CD14-positive monocyte (primary cell): ENCODE measurements at regions of chr10 and their contacts with region 1.

Region 1: GRCh38 chr10:124688889-124689670 is 55.1 kb downstream of the FAM53B start:
- DNase-seq: no peak
- H3K4me3 ChIP-seq: no peak overlapping the region
- H3K4me3 Mint-ChIP-seq: peak overlapping the region in 1 of 2 donors; percentile 31
- H3K27ac ChIP-seq: peak overlapping the region in 1 of 2 donors; percentile 40
- H3K27ac Mint-ChIP-seq: peak overlapping the region in 5 of 7 donors; percentile 17 to 93 (median 30)
- H3K4me1 ChIP-seq: peaks cover 40 to 43% of the 10 kb centered on the region in 2 donors
- H3K4me1 Mint-ChIP-seq: peaks cover 41% of the 10 kb centered on the region
- H3K27me3 ChIP-seq: no peaks in the 10 kb centered on the region
- H3K27me3 Mint-ChIP-seq: peaks cover 0 to 1% (median 0%) of the 10 kb centered on the region in 3 donors
- CTCF ChIP-seq: no peak

Region 2: DNA sequence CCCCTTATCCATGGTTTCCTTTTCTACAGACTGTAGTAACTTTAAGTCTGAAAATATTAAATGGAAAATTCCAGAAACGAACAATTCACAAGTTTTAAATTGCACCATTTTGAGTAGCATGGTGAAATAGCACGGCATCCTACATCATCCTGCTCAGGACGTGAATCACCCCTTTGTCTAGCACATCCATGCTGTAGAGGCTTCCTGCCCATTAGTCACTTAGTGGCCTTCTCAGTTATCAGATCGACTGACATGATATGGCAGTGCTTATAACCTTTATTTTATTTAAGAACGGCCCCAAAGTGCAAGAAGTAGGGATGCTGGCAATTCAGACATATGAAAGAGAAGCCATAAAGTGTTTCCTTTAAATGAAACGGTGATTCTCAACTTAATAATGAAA is 880.2 kb before region 1 on chr10:
- intact Hi-C with region 1: no loop called
- DNase-seq: no peak
- H3K4me3 ChIP-seq: no peak overlapping the region
- H3K4me3 Mint-ChIP-seq: no peak overlapping the region
- H3K27ac ChIP-seq: no peak overlapping the region
- H3K27ac Mint-ChIP-seq: no peak overlapping the region
- H3K4me1 ChIP-seq: no peaks in the 10 kb centered on the region
- H3K4me1 Mint-ChIP-seq: no peaks in the 10 kb centered on the region
- H3K27me3 ChIP-seq: peaks cover 4 to 5% of the 10 kb centered on the region in 2 donors
- H3K27me3 Mint-ChIP-seq: peaks cover 3 to 12% (median 8%) of the 10 kb centered on the region in 3 donors
- CTCF ChIP-seq: no peak

Region 3: GRCh38 chr10:124647421-124648130 is 41.5 kb before region 1 on chr10:
- intact Hi-C with region 1: loop called (anchors 5 kb)
- DNase-seq: peak; percentile 92 to 95 (median 94)
- H3K4me3 ChIP-seq: peak overlapping the region in 2 of 3 experiments; percentile 10 to 64
- H3K4me3 Mint-ChIP-seq: peak overlapping the region; percentile 52 to 87
- H3K27ac ChIP-seq: peak overlapping the region; percentile 85 to 92
- H3K27ac Mint-ChIP-seq: peak overlapping the region; percentile 95 to 98 (median 96)
- H3K4me1 ChIP-seq: peaks cover 91 to 100% of the 10 kb centered on the region in 2 donors
- H3K4me1 Mint-ChIP-seq: peaks cover 94% of the 10 kb centered on the region
- H3K27me3 ChIP-seq: no peaks in the 10 kb centered on the region
- H3K27me3 Mint-ChIP-seq: no peaks in the 10 kb centered on the region
- CTCF ChIP-seq: peak; percentile 50